ENCODE measurements at regions of chr14 and their contacts with region 1.

Region 1: DNA sequence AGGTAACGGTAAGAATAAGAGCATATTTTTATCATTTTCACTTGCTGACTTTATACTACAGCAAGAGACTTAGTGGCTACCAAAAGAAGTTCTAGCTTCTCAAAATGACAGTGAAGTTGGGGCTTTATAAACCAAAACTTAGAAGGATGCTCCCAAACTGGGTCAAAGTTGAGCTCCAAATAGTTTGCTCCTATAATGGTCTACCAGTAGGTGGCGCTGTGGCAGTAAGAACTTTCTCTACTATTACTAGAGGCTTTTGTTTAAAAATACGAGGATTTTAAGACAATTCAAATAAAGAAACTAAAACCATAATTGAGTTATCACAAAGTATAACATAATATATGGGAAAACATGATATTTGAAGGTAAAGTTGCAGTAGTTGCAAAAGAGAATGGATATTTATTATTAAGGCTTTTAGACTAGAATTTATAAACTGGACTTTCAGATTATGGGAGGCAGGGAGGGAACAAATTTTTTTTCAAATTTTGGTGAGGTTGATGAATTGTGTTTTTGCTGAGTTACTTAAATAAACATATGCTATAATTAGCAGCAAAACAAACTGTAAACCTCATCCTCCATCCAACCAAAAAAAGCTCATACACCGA is 75.0 kb downstream of the TGFB3 start:
- DNase-seq: peak; percentile 21
- ATAC-seq: peak; percentile 69
- H3K4me3 ChIP-seq: no peak overlapping the region
- H3K27ac ChIP-seq: no peak overlapping the region
- H3K4me1 ChIP-seq: 0 out of 4 replicates have a peak, but pooled peaks cover 0 to 6% of the 10 kb centered on the region in 2 experiments
- H3K27me3 ChIP-seq: no peaks in the 10 kb centered on the region
- CTCF ChIP-seq: peak; percentile 45 to 95 (median 79); a peak in 5 of 6 replicates
- POLR2A ChIP-seq: no peak
- RAD21 ChIP-seq: peak; percentile 64

Region 2: DNA sequence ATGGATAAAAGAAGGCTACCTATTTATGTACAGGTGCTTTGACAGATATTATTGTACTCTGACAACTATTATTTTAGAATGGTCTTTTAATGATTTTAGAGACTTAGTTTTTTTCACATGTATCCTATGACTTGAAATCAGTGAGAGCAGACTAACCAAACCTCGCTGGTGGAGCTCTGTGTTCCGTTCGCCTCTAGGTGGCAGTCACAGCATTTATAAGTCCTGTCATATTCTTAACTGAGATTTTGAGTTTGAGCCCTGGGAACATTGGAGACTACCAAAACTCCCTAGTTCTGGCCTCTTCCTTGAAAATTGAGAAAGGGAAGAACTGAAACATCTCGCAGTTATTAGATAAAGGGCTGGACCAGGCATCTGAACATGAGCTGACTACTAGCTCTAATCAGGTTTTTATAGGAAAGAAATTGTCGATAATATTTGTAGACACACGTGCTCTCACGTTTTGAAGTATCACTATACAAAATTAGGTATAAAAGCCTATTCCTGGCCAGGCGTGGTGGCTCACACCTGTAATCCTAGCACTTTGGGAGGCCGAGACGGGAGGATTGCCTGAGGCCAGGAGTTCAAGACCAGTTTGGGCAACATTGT is 197.5 kb before region 1 on chr14:
- CTCF ChIA-PET with region 1: interaction called, 7 read pairs
- POLR2A ChIA-PET with region 1: no interaction called
- RAD21 ChIA-PET with region 1: no interaction called
- intact Hi-C with region 1: loop called (anchors 10 kb)
- DNase-seq: peak; percentile 68
- ATAC-seq: peak; percentile 58
- H3K4me3 ChIP-seq: no peak overlapping the region
- H3K27ac ChIP-seq: no peak overlapping the region
- H3K4me1 ChIP-seq: peaks cover 17 to 18% of the 10 kb centered on the region in 2 experiments
- H3K27me3 ChIP-seq: no peaks in the 10 kb centered on the region
- CTCF ChIP-seq: peak; percentile 68 to 89 (median 78)
- POLR2A ChIP-seq: no peak
- RAD21 ChIP-seq: peak; percentile 76

Region 3: DNA sequence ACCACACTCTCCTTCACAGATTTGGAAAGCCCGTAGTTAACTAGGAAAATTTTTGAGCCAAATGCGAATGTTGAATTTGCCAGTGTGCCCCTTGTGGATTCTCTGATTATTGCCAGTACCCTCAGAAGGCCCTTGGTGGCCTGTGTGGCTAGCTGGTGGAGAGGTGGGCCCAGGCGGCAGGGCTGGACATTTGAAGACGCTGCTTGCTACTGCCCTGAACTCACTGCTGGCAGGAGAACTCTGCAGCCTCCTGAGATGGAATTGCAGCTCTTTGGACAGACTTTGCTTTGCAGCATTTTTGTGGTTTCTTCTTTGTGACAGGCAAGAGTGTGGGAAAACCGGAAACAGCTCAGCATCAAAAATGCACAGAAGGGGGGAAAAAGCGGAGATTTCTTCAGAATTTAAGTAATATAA is 22.6 kb before region 1 on chr14:
- CTCF ChIA-PET with region 1: interaction called, 19 read pairs
- POLR2A ChIA-PET with region 1: no interaction called
- RAD21 ChIA-PET with region 1: no interaction called
- intact Hi-C with region 1: no loop called
- DNase-seq: no peak
- ATAC-seq: peak; percentile 82
- H3K4me3 ChIP-seq: no peak overlapping the region
- H3K27ac ChIP-seq: no peak overlapping the region
- H3K4me1 ChIP-seq: peaks cover 0 to 8% of the 10 kb centered on the region in 2 experiments; a peak in 1 of 4 replicates
- H3K27me3 ChIP-seq: no peaks in the 10 kb centered on the region
- CTCF ChIP-seq: peak in 2 of 3 experiments; percentile 54 to 57; a peak in 4 of 6 replicates
- POLR2A ChIP-seq: no peak
- RAD21 ChIP-seq: peak; percentile 31; the same call in 1 of the 2 replicates

Region 4: DNA sequence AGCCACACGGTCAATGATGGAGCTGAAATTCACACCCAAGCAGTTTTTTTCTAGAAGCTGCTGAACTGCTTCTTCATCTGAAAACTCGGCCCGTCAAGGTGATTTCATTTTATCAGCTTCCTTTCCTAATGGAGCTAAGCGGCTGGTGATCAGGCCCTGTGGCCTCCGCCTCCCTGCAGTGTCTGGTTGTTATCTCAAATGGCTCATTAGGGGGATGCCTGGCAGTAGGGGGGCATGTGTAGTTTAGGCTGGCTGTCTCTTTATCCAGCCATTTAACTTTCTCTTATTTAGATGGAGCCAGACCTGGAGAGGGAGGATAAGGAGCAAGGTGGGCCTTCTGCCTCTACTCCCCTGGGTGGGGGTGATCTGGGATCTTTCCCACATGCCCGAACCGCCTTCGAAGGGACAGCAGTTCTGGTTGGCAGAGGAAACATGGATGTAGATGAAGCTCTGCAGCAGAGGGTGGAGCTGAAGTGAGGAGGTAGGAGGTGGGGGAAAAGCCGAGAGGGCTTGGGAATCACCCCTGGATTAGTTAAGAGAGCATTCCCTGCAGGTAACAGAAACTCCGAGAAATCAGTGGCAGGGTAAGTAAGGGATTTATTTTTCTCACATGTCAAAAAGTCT is 10.7 kb after region 1 on chr14:
- CTCF ChIA-PET with region 1: interaction called, 35 read pairs
- POLR2A ChIA-PET with region 1: no interaction called
- RAD21 ChIA-PET with region 1: no interaction called
- intact Hi-C with region 1: no loop called
- DNase-seq: no peak
- ATAC-seq: no peak
- H3K4me3 ChIP-seq: no peak overlapping the region
- H3K27ac ChIP-seq: no peak overlapping the region
- H3K4me1 ChIP-seq: no peaks in the 10 kb centered on the region
- H3K27me3 ChIP-seq: no peaks in the 10 kb centered on the region
- CTCF ChIP-seq: no peak
- POLR2A ChIP-seq: no peak
- RAD21 ChIP-seq: no peak

Region 5: GRCh38 chr14:75982266-75983018 is 75.7 kb after region 1 on chr14:
- CTCF ChIA-PET with region 1: interaction called, 37 read pairs
- POLR2A ChIA-PET with region 1: interaction called, 5 read pairs
- RAD21 ChIA-PET with region 1: interaction called, 4 to 9 read pairs
- intact Hi-C with region 1: loop called (anchors 2 kb)
- DNase-seq: peak; percentile 51
- ATAC-seq: peak; percentile 76
- H3K4me3 ChIP-seq: peak overlapping the region; percentile 53 to 86
- H3K27ac ChIP-seq: peak overlapping the region; percentile 42; the same call in 1 of the 2 replicates
- H3K4me1 ChIP-seq: peaks cover 12 to 27% of the 10 kb centered on the region in 2 experiments
- H3K27me3 ChIP-seq: no peaks in the 10 kb centered on the region
- CTCF ChIP-seq: peak; percentile 44 to 69 (median 52); a peak in 5 of 6 replicates
- POLR2A ChIP-seq: no peak
- RAD21 ChIP-seq: peak; percentile 83